Activated T-helper 2 cell treated with anti-CD3 and anti-CD28 coated beads, Interferon-gamma antibody, Interleukin-2, Interleukin-4, amounts not matched to agents 10 μg/mL and 5 μg/mL and 100 μg/mL, durations not matched to agents 14 hours and 24 hours and 36 hours (primary cell): ENCODE measurements at regions of chr9 and their contacts with region 1.

Region 1: DNA sequence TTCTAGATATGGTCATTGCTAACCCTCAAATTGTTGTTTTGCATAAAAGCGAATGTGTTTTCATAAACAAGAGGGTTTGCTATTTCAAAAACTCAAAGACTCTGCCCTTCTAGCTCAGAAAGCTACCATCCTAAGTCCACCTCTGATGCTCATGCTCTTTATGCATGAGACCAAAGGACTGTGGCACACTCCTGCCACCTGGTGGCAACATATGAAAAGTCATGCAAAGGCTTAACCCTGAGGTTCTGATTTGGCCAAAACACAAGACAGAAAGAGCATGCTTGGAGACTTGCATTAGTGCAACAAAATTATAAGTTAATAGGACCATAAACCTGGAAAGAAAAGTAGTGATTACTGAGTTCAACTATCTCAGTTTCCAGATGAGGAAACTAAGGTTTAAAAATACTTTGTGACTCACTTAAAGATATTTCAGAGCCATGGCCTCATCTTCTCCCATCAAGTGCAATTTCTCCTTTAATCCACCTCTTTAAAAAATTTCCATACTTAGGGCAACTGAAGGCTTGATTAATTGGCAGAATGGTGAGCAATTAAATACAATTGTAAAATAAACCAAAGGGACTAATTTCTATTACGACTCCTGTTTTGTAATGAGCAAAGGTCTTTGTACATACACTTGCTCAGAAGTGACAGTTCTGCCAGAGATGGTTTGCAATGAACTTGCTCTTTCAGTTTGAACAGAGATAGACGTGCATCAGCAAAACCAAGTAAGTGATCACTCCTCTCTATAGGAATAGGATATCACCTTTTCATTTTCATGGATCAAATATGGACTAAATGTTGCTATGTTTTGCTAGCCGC is 110.7 kb upstream of the RAD23B start:
- DNase-seq: peak; percentile 35
- H3K4me3 Mint-ChIP-seq: no peak overlapping the region
- H3K27ac Mint-ChIP-seq: peak overlapping the region; percentile 36
- H3K4me1 Mint-ChIP-seq: peaks cover 25% of the 10 kb centered on the region
- H3K27me3 Mint-ChIP-seq: peaks cover 3% of the 10 kb centered on the region

Region 2: GRCh38 chr9:105842023-105842644 is 1330.2 kb before region 1 on chr9:
- intact Hi-C with region 1: loop called (anchors 5 kb)
- DNase-seq: no peak
- H3K4me3 Mint-ChIP-seq: no peak overlapping the region
- H3K27ac Mint-ChIP-seq: no peak overlapping the region
- H3K4me1 Mint-ChIP-seq: no peaks in the 10 kb centered on the region
- H3K27me3 Mint-ChIP-seq: peaks cover 2% of the 10 kb centered on the region

Region 3: DNA sequence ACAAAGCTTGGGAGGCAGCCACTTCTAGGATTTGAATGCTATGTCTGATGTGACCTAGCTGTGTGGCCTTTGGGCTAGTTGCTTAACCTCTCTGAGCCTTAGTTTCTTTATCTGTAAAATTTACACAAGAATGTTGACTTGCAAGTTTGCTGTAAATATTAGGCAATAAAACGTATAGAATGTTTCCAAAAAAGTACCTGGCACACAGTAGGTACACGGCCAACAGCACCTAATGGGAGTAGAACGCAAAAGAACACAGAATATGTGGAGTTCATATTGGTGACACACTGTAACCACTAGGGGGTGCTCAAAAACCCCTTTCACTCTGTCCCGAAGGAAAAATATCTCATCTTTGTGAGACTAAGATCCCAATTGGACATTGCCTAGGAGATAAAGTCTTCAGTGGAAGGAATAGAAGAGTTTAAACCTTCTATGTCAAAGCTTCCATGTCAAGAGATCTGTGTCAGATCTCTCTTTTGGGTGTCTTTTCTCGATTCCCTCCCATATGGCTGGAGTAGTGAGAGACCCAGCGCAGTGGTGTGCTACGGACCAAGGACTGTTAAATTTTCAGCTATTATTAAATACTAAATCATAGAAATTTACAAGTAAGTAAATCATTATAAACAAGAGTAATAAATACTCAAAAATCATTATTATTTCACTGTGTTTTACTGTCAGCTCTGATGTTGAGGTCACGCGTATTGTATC is 34.7 kb before region 1 on chr9:
- intact Hi-C with region 1: loop called (anchors 1 kb)
- DNase-seq: no peak
- H3K4me3 Mint-ChIP-seq: no peak overlapping the region
- H3K27ac Mint-ChIP-seq: no peak overlapping the region
- H3K4me1 Mint-ChIP-seq: no peaks in the 10 kb centered on the region
- H3K27me3 Mint-ChIP-seq: peaks cover 5% of the 10 kb centered on the region

Region 4: GRCh38 chr9:107218829-107219485 is 46.6 kb after region 1 on chr9:
- intact Hi-C with region 1: loop called (anchors 5 kb)
- DNase-seq: no peak
- H3K4me3 Mint-ChIP-seq: no peak overlapping the region
- H3K27ac Mint-ChIP-seq: no peak overlapping the region
- H3K4me1 Mint-ChIP-seq: peaks cover 8% of the 10 kb centered on the region
- H3K27me3 Mint-ChIP-seq: peaks cover 12% of the 10 kb centered on the region

Region 5: GRCh38 chr9:107243751-107244150 is 71.4 kb after region 1 on chr9:
- intact Hi-C with region 1: loop called (anchors 1 kb)
- DNase-seq: no peak
- H3K4me3 Mint-ChIP-seq: no peak overlapping the region
- H3K27ac Mint-ChIP-seq: peak overlapping the region; percentile 68
- H3K4me1 Mint-ChIP-seq: peaks cover 21% of the 10 kb centered on the region
- H3K27me3 Mint-ChIP-seq: no peaks in the 10 kb centered on the region

Region 6: GRCh38 chr9:107288696-107289095 is 116.3 kb after region 1 on chr9:
- intact Hi-C with region 1: loop called (anchors 2 kb)
- DNase-seq: no peak
- H3K4me3 Mint-ChIP-seq: no peak overlapping the region
- H3K27ac Mint-ChIP-seq: peak overlapping the region; percentile 91
- H3K4me1 Mint-ChIP-seq: peaks cover 56% of the 10 kb centered on the region
- H3K27me3 Mint-ChIP-seq: no peaks in the 10 kb centered on the region

Region 7: GRCh38 chr9:107340920-107341632 is 168.7 kb after region 1 on chr9:
- intact Hi-C with region 1: loop called (anchors 5 kb)
- DNase-seq: peak; percentile 65
- H3K4me3 Mint-ChIP-seq: no peak overlapping the region
- H3K27ac Mint-ChIP-seq: no peak overlapping the region
- H3K4me1 Mint-ChIP-seq: peaks cover 6% of the 10 kb centered on the region
- H3K27me3 Mint-ChIP-seq: no peaks in the 10 kb centered on the region